ENCODE measurements at regions of chr6 and their contacts with region 1.

Region 1: GRCh38 chr6:54846857-54847671 is 493 bp downstream of the FAM83B start:
- H3K4me3 ChIP-seq: peak overlapping the region; percentile 79
- H3K27ac ChIP-seq: peak overlapping the region; percentile 97
- H3K4me1 ChIP-seq: peaks cover 21% of the 10 kb centered on the region
- CTCF ChIP-seq: no peak

Region 2: DNA sequence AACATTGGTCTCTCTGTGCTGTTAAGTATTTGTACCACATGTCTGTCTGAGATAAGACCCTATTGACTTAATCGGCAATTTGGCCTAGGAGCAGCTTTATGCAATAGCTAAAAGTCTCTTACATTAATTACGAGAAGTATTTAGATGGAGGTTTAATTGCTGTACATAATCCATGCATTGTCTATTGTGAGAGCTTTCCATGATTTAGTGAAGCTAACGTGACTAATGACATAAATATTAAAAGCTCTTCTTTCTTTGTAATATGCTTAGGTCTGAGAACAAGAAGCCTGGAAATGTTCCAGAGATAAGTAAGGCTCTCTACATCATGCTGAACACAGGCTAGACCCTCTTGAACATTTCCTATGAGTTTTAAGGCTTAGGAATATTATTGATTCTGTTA is 33.2 kb before region 1 on chr6:
- CTCF ChIA-PET with region 1: no interaction called
- POLR2A ChIA-PET with region 1: no interaction called
- H3K4me3 ChIP-seq: no peak overlapping the region
- H3K27ac ChIP-seq: no peak overlapping the region
- H3K4me1 ChIP-seq: no peaks in the 10 kb centered on the region
- CTCF ChIP-seq: no peak

Region 3: DNA sequence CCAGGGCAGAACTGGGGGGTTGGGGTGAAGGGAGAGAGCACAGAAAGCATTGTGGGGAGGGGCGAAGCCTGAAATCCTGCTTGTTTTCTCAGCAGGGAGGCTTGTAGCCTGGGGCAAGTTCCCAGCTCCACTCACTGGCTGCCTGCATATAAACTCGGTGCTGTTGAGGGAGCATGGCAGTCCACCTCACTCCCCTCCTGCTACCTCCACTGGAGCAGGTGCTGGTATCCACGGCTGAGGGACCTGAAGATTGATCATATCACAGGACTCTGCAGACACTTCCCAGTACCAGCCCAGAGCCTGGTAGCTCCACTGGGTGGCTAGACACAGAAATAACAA is 261.7 kb after region 1 on chr6:
- CTCF ChIA-PET with region 1: no interaction called
- POLR2A ChIA-PET with region 1: interaction called, 13 read pairs
- H3K4me3 ChIP-seq: no peak overlapping the region
- H3K27ac ChIP-seq: no peak overlapping the region
- H3K4me1 ChIP-seq: peaks cover 7% of the 10 kb centered on the region; the same call in 1 of the 2 replicates
- CTCF ChIP-seq: no peak

Measured in HEK293 (cell line).